Activated CD8-positive, alpha-beta memory T cell treated with anti-CD3 and anti-CD28 coated beads, Interleukin-2, amount 10 ng/mL, durations not matched to agents 7 days and 5 days (primary cell): ENCODE measurements at regions of chr12 and their contacts with region 1.

Region 1: GRCh38 chr12:120228291-120229070 is 27.6 kb upstream of the RPLP0 start:
- DNase-seq: peak; percentile 93
- ATAC-seq: peak; percentile 84
- H3K4me3 Mint-ChIP-seq: no peak overlapping the region
- H3K27ac Mint-ChIP-seq: peak overlapping the region; percentile 74
- H3K4me1 Mint-ChIP-seq: peaks cover 78% of the 10 kb centered on the region
- H3K27me3 Mint-ChIP-seq: no peaks in the 10 kb centered on the region

Region 2: DNA sequence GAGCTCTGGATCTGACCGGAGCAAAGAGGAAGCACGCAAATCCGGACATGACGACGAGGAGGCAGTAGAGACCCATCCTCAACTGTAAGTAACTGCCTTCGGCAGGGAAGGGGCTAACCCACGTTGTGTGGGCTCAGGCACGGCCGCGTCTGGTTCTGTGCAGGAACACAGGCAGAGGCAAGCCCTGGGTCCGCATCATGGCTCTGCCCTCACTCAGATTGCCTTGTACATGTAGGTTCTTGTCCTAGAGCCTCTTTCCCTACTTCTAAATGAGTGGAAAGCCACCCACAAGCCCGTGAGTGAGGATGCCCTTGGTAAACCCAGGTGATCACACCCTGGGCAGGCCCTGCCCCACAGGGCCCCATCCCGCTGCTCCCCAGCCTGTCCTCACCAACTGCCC is 18.6 kb before region 1 on chr12:
- CTCF ChIA-PET with region 1: interaction called, 94 read pairs
- DNase-seq: no peak
- ATAC-seq: no peak
- H3K4me3 Mint-ChIP-seq: no peak overlapping the region
- H3K27ac Mint-ChIP-seq: no peak overlapping the region
- H3K4me1 Mint-ChIP-seq: no peaks in the 10 kb centered on the region
- H3K27me3 Mint-ChIP-seq: no peaks in the 10 kb centered on the region

Region 3: GRCh38 chr12:120265473-120266179 is 37.1 kb after region 1 on chr12 and contains the start of gene PXN:
- CTCF ChIA-PET with region 1: interaction called, 768 read pairs
- DNase-seq: peak; percentile 92
- ATAC-seq: peak; percentile 91
- H3K4me3 Mint-ChIP-seq: peak within 1 kb of the TSS; percentile 90
- H3K27ac Mint-ChIP-seq: peak within 1 kb of the TSS; percentile 73
- H3K4me1 Mint-ChIP-seq: peaks cover 47% of the 10 kb centered on the region
- H3K27me3 Mint-ChIP-seq: no peaks in the 10 kb centered on the region
- total RNA-seq, gene PXN: 69.3 to 146 TPM

Region 4: GRCh38 chr12:120292661-120293531 is 64.4 kb after region 1 on chr12 and contains the start of gene RNU4-1:
- CTCF ChIA-PET with region 1: interaction called, 23 read pairs
- DNase-seq: peak; percentile 90
- ATAC-seq: peak; percentile 45
- H3K4me3 Mint-ChIP-seq: no peak within 1 kb of the TSS
- H3K27ac Mint-ChIP-seq: no peak within 1 kb of the TSS
- H3K4me1 Mint-ChIP-seq: peaks cover 10% of the 10 kb centered on the region
- H3K27me3 Mint-ChIP-seq: peaks cover 2% of the 10 kb centered on the region
- total RNA-seq, gene RNU4-1: 780 to 2,122 TPM